Breast epithelium (tissue), 4 donors: ENCODE measurements at regions of chr15 and their contacts with region 1.

Region 1: DNA sequence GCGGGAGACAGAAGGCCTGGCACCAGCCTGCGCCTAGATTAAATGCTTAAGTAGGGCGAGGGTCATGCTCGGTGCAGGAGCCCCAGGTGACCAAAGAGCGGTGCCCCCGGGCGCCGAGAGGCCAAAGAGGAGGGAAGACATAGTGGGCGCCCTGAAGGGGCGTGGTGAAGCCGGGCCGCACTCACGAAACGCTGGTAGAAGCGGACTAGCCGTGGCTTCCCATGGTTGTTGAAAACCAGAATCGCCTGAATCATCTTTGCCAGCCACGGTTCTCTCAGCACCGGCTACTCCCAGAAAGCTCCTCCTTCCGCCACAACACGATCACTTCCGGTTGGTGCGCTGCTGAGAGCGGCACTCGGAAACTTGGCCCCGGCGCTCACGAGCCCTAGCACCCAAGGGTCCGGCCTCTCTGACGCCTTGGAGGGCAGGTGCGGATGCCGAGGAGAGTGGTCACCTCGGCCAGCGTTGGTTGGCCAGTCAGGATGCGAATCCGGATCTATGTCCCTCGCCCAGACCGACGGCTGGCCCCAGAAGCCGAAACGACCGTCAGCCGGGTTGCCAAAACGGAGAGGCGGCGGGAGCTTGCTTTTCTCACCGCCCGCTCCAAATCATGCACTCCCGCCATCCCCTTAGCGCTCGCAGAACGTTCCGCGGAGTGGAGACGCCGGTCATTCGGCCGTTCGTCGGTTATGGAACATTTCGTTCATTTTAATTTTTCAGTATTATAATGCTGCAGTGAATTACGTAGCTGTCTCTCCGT is at the start of gene AP3S2:
- DNase-seq: peak; percentile 91 to 94
- H3K4me3 ChIP-seq: peak within 1 kb of the TSS; percentile 76 to 95 (median 87)
- H3K27ac ChIP-seq: peak within 1 kb of the TSS; percentile 92 to 93
- H3K4me1 ChIP-seq: no peaks in the 10 kb centered on the region
- H3K27me3 ChIP-seq: no peaks in the 10 kb centered on the region
- CTCF ChIP-seq: peak in 1 of 3 donors; percentile 29
- POLR2A ChIP-seq: no peak
- total RNA-seq, gene AP3S2: 37.4 to 57.4 (median 52.8) TPM

Region 2: DNA sequence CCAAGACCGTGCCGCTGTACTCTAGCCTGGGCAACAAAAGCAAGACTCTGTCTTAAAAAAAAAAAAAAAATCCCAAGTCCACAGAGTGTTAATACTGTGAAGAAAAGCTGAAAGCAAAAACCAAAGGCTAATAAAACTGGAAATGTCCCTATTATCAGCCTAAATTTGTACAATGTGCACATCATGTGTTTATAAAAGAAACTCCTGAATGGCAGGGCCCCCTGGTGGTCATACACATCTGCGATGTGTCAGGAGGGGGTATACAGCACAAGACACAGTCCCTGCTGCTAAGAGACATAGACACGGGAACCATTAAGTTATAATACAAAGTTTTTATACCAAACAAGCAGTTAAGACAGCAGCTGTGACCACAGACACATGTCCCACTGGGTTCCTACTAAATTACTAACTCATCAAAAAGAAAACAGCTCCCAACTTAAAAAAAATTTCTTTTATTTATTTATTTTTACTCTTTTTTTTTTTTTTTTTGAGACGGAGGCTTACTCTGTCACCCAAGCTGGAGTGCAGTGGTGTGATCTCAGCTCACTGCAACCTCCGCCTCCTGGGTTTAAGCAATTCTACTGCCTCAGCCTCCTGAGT is 177.4 kb after region 1 on chr15:
- intact Hi-C with region 1: loop called (anchors 10 kb)
- DNase-seq: peak; percentile 71
- H3K4me3 ChIP-seq: no peak overlapping the region
- H3K27ac ChIP-seq: no peak overlapping the region
- H3K4me1 ChIP-seq: peaks cover 0 to 5% of the 10 kb centered on the region in 2 donors
- H3K27me3 ChIP-seq: no peaks in the 10 kb centered on the region
- CTCF ChIP-seq: peak; percentile 67 to 86 (median 73)
- POLR2A ChIP-seq: no peak